PC-9 (cell line): ENCODE measurements at regions of chr17 and their contacts with region 1.

Region 1: DNA sequence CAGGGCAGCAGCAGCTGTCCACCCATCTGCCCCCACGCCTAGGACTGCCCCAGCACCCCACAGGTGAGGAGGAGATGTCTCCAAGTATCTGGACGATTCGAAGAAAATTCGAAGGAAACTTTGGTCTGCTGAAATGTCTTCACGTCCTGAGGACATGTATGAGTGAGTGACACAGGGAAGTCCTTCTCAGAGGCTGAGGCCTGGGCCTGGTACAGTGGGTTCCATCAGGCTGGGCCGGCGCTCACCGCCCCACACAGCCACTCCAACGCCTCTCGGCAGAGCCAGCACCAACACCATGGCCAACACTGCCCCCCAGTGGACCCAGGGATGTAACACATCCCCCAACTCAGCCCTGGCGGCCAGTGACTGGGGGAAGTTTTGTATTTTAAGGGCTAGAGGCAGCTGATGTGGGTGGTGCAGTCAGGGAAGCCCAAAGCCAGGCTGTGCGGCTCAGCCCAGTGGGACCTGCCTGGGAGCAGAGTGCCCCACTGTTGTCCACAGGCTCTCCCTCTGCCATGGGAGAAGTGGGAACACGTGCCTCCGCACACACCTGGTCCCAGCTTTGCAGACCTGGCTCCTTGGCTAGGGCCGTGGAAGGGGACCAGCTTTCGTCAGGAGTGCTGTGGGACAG is 55.8 kb upstream of the FASN start:
- DNase-seq: peak; percentile 39 to 82
- H3K4me3 ChIP-seq: no peak overlapping the region
- H3K27ac ChIP-seq: no peak overlapping the region
- H3K4me1 ChIP-seq: no peaks in the 10 kb centered on the region
- H3K27me3 ChIP-seq: no peaks in the 10 kb centered on the region
- CTCF ChIP-seq: peak; percentile 81

Region 2: GRCh38 chr17:82195675-82196672 is 42.1 kb after region 1 on chr17:
- CTCF ChIA-PET with region 1: no interaction called
- POLR2A ChIA-PET with region 1: interaction called, 10 read pairs
- intact Hi-C with region 1: no loop called
- DNase-seq: no peak
- H3K4me3 ChIP-seq: no peak overlapping the region
- H3K27ac ChIP-seq: no peak overlapping the region
- H3K4me1 ChIP-seq: no peaks in the 10 kb centered on the region
- H3K27me3 ChIP-seq: no peaks in the 10 kb centered on the region
- CTCF ChIP-seq: no peak